Esophagus muscularis mucosa (tissue), 4 donors: ENCODE measurements at regions of chr12 and their contacts with region 1.

Region 1: GRCh38 chr12:124518051-124518932 is 49.1 kb downstream of the NCOR2 start:
- DNase-seq: peak; percentile 100
- H3K4me3 ChIP-seq: peak overlapping the region; percentile 55 to 60 (median 58)
- H3K27ac ChIP-seq: peak overlapping the region; percentile 96 to 98 (median 97)
- H3K4me1 ChIP-seq: peaks cover 93 to 100% (median 96%) of the 10 kb centered on the region in 4 donors
- H3K27me3 ChIP-seq: no peaks in the 10 kb centered on the region
- CTCF ChIP-seq: no peak
- EP300 ChIP-seq: no peak
- POLR2A ChIP-seq: no peak

Region 2: GRCh38 chr12:124422570-124423523 is 95.4 kb before region 1 on chr12:
- intact Hi-C with region 1: loop called (anchors 5 kb)
- DNase-seq: peak; percentile 98
- H3K4me3 ChIP-seq: peak overlapping the region; percentile 23 to 53 (median 30)
- H3K27ac ChIP-seq: peak overlapping the region; percentile 88 to 97 (median 93)
- H3K4me1 ChIP-seq: peaks cover 58 to 79% (median 71%) of the 10 kb centered on the region in 4 donors
- H3K27me3 ChIP-seq: no peaks in the 10 kb centered on the region
- CTCF ChIP-seq: peak in 1 of 3 experiments; percentile 10
- EP300 ChIP-seq: peak; percentile 75
- POLR2A ChIP-seq: no peak

Region 3: GRCh38 chr12:124567661-124568373 is 49.5 kb after region 1 on chr12:
- intact Hi-C with region 1: loop called (anchors 5 kb)
- DNase-seq: peak; percentile 98
- H3K4me3 ChIP-seq: peak overlapping the region; percentile 79 to 96 (median 88)
- H3K27ac ChIP-seq: peak overlapping the region; percentile 92 to 99 (median 95)
- H3K4me1 ChIP-seq: peaks cover 48 to 59% (median 53%) of the 10 kb centered on the region in 4 donors
- H3K27me3 ChIP-seq: no peaks in the 10 kb centered on the region
- CTCF ChIP-seq: peak in 2 of 3 experiments; percentile 7 to 31
- EP300 ChIP-seq: peak; percentile 48
- POLR2A ChIP-seq: no peak